ENCODE measurements at regions of chr1 and their contacts with region 1.

Region 1: GRCh38 chr1:165114022-165114888 is 242.3 kb downstream of the LMX1A start:
- DNase-seq: peak; percentile 72
- ATAC-seq: peak; percentile 75
- H3K4me3 Mint-ChIP-seq: no peak overlapping the region
- H3K27ac Mint-ChIP-seq: no peak overlapping the region
- H3K4me1 Mint-ChIP-seq: peaks cover 13% of the 10 kb centered on the region
- H3K27me3 Mint-ChIP-seq: peaks cover 50% of the 10 kb centered on the region
- CTCF ChIP-seq: peak; percentile 69

Region 2: GRCh38 chr1:164961715-164962114 is 152.5 kb before region 1 on chr1:
- CTCF ChIA-PET with region 1: no interaction called
- POLR2A ChIA-PET with region 1: interaction called, 10 read pairs
- DNase-seq: no peak
- ATAC-seq: no peak
- H3K4me3 Mint-ChIP-seq: no peak overlapping the region
- H3K27ac Mint-ChIP-seq: no peak overlapping the region
- H3K4me1 Mint-ChIP-seq: no peaks in the 10 kb centered on the region
- H3K27me3 Mint-ChIP-seq: no peaks in the 10 kb centered on the region; the same call in 1 of the 2 replicates
- CTCF ChIP-seq: no peak

Region 3: DNA sequence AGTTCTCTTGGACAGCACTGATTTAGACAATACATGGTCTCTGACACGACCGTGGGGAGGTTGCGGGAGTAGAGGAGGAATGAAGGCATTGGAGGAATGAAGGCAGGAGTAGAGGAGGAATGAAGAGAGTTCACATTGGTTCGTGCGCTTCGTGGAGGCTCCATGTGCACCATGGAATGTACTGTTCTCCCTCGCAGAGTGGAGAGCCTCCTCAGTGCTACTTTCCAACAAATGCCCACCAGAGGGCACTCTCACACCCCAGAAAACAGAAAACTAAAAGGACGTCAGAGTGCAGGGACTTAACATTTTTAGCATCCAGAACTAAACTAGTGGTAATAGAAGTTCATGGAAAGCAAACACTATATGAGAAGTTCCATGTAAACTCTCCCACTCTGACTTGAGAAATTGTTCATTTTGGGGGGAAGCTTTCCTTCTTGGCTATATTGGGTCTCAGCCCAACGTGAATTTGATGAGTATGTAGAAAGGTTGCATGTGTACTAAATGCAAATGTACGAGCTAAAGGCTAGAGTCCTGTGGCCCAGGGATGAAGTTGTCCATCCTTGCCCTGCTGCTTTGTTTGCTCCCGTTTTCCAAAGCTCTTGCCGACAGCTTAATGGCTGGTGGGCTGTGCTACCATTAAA is 30.6 kb after region 1 on chr1:
- CTCF ChIA-PET with region 1: interaction called, 10 read pairs
- POLR2A ChIA-PET with region 1: no interaction called
- DNase-seq: peak; percentile 71
- ATAC-seq: peak; percentile 90
- H3K4me3 Mint-ChIP-seq: no peak overlapping the region
- H3K27ac Mint-ChIP-seq: no peak overlapping the region
- H3K4me1 Mint-ChIP-seq: no peaks in the 10 kb centered on the region
- H3K27me3 Mint-ChIP-seq: peaks cover 29% of the 10 kb centered on the region
- CTCF ChIP-seq: no peak